A673 (cell line): ENCODE measurements at regions of chr6 and their contacts with region 1.

Region 1: GRCh38 chr6:39302669-39303424 is 11.4 kb downstream of the KCNK17 start:
- DNase-seq: peak; percentile 82
- H3K4me3 ChIP-seq: no peak overlapping the region
- H3K27ac ChIP-seq: no peak overlapping the region
- H3K4me1 ChIP-seq: no peaks in the 10 kb centered on the region
- H3K27me3 ChIP-seq: peaks cover 23% of the 10 kb centered on the region
- CTCF ChIP-seq: peak; percentile 80

Region 2: GRCh38 chr6:38871741-38872568 is 430.9 kb before region 1 on chr6:
- CTCF ChIA-PET with region 1: interaction called, 3 read pairs
- POLR2A ChIA-PET with region 1: no interaction called
- intact Hi-C with region 1: loop called (anchors 2 kb)
- DNase-seq: peak; percentile 70
- H3K4me3 ChIP-seq: no peak overlapping the region
- H3K27ac ChIP-seq: no peak overlapping the region
- H3K4me1 ChIP-seq: no peaks in the 10 kb centered on the region
- H3K27me3 ChIP-seq: peaks cover 6% of the 10 kb centered on the region
- CTCF ChIP-seq: peak; percentile 96

Region 3: DNA sequence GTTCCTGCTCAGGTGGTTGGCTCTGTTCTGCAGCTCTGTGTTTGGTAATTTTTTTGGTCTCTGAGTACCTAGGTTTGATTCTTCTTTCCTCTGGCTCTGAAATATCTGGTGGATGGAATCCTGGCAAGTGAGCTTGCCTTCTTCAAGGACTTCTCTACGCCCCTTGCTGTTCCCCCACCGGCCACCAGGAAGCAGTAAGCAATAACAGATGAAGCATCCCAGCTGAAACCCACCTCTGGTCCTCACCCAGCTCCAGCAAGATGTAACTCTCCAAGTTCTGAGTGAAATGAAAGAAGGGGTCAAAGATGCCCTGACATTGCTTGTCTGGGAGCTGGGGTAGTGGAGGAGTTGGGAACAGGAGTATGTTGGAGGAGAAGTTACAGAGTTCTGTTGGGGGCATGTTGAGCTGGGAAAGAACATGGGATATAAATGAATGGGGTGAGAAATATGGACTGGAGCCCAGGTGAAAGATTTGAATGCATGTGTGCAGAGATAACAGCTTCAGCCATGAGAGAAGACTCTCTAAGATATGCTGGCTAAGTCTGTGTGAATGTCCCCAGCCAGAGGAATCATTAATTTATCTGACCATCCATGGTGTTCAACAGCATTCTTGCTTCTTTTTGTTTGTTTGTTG is 305.6 kb before region 1 on chr6:
- CTCF ChIA-PET with region 1: interaction called, 11 read pairs
- POLR2A ChIA-PET with region 1: no interaction called
- intact Hi-C with region 1: loop called (anchors 1 kb)
- DNase-seq: peak; percentile 47
- H3K4me3 ChIP-seq: no peak overlapping the region
- H3K27ac ChIP-seq: no peak overlapping the region
- H3K4me1 ChIP-seq: no peaks in the 10 kb centered on the region
- H3K27me3 ChIP-seq: peaks cover 82% of the 10 kb centered on the region
- CTCF ChIP-seq: peak; percentile 65

Region 4: DNA sequence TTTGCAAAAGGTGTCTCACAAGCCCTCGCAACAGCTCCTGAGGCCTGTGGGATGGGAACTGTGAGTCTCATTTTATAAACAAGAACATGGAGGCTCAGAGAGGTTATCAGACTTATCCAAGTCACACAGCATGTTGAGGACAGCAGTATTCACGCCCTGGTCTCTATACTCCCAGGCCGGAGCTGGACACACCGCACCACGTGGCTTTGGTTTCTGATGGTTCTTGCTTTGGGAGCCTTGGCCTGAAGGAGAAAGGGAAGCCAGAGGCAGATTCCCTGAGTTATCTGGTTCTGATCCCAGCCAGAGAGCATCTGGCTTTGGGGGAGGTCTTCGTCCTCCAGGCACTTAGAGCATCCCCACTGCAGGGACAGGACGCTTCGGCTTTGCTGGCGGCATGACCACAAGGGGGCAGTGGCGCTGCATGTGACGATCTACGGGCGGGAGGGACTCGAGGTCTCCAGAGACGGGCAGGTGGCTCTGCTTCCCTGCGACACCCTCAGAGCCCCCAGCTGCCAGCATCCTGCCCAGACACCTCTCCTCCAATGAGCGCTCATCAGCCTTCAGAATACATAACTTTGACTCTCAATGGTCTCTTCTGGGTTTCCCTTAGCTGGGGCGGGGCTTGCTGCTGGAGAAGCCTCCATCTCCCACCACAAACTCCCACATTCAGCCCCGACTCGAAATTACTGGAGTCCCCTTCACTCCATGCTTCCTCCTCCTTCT is 136.5 kb before region 1 on chr6:
- CTCF ChIA-PET with region 1: interaction called, 11 read pairs
- POLR2A ChIA-PET with region 1: no interaction called
- intact Hi-C with region 1: loop called (anchors 1 kb)
- DNase-seq: peak; percentile 80
- H3K4me3 ChIP-seq: no peak overlapping the region
- H3K27ac ChIP-seq: no peak overlapping the region
- H3K4me1 ChIP-seq: no peaks in the 10 kb centered on the region
- H3K27me3 ChIP-seq: peaks cover 32% of the 10 kb centered on the region
- CTCF ChIP-seq: peak; percentile 92